ENCODE measurements at regions of chr19 and their contacts with region 1.

Region 1: GRCh38 chr19:11528551-11529341 is at the start of gene ECSIT:
- DNase-seq: peak; percentile 90 to 95 (median 92)
- H3K4me3 ChIP-seq: peak within 1 kb of the TSS; percentile 70 to 83
- H3K4me3 Mint-ChIP-seq: peak within 1 kb of the TSS; percentile 94 to 99 (median 98)
- H3K27ac ChIP-seq: peak within 1 kb of the TSS; percentile 76
- H3K27ac Mint-ChIP-seq: peak within 1 kb of the TSS; percentile 91 to 98 (median 97)
- H3K4me1 ChIP-seq: peaks cover 15% of the 10 kb centered on the region
- H3K4me1 Mint-ChIP-seq: peaks cover 13 to 21% (median 18%) of the 10 kb centered on the region in 4 donors
- H3K27me3 ChIP-seq: no peaks in the 10 kb centered on the region
- H3K27me3 Mint-ChIP-seq: no peaks in the 10 kb centered on the region
- total RNA-seq, gene ECSIT: 39.5 to 46.2 TPM

Region 2: DNA sequence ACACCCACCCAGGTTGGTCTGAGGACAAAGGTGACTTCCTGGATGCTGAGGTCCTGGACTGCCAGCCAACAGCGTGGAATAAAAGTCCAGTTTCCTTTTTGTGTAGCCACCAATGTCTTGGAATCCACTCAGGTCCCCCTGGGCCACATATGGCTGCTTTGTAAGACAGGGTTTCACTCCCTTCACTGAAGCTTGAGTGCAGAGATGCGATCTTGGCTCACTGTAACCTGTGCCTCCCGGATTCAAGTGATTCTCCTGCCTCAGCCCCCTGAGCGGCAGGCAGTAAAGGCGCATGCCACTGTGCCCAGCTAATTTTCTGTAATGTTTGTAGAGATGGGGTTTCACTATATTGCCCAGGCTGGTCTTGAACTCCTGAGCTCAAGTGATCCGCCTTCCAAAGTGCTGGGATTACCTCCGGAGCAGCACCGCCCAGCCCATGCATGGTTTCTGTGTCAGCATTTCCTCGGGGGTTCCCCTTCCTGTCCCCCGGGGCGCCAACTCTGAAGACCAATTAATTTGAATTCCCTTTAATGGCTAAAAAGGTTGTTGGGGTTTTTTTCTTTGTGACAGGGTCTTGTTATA is 348.9 kb before region 1 on chr19:
- CTCF ChIA-PET with region 1: no interaction called
- POLR2A ChIA-PET with region 1: no interaction called
- intact Hi-C with region 1: no loop called
- DNase-seq: no peak
- H3K4me3 ChIP-seq: no peak overlapping the region
- H3K4me3 Mint-ChIP-seq: peak overlapping the region in 2 of 8 donors; percentile 17 to 20
- H3K27ac ChIP-seq: no peak overlapping the region
- H3K27ac Mint-ChIP-seq: peak overlapping the region in 1 of 7 donors; percentile 49
- H3K4me1 ChIP-seq: peaks cover 9% of the 10 kb centered on the region
- H3K4me1 Mint-ChIP-seq: peaks cover 3 to 15% (median 7%) of the 10 kb centered on the region in 4 donors
- H3K27me3 ChIP-seq: no peaks in the 10 kb centered on the region
- H3K27me3 Mint-ChIP-seq: peaks cover 0 to 4% of the 10 kb centered on the region in 2 donors

Region 3: GRCh38 chr19:11293433-11294389 is 235.0 kb before region 1 on chr19:
- CTCF ChIA-PET with region 1: no interaction called
- POLR2A ChIA-PET with region 1: no interaction called
- intact Hi-C with region 1: no loop called
- DNase-seq: peak; percentile 64 to 75 (median 71)
- H3K4me3 ChIP-seq: no peak overlapping the region
- H3K4me3 Mint-ChIP-seq: peak overlapping the region in 3 of 8 donors; percentile 20 to 71 (median 48)
- H3K27ac ChIP-seq: no peak overlapping the region
- H3K27ac Mint-ChIP-seq: peak overlapping the region in 2 of 7 donors; percentile 41 to 46
- H3K4me1 ChIP-seq: peaks cover 8% of the 10 kb centered on the region
- H3K4me1 Mint-ChIP-seq: peaks cover 4 to 8% (median 7%) of the 10 kb centered on the region in 4 donors
- H3K27me3 ChIP-seq: no peaks in the 10 kb centered on the region
- H3K27me3 Mint-ChIP-seq: peaks cover 12 to 16% of the 10 kb centered on the region in 2 donors

Region 4: DNA sequence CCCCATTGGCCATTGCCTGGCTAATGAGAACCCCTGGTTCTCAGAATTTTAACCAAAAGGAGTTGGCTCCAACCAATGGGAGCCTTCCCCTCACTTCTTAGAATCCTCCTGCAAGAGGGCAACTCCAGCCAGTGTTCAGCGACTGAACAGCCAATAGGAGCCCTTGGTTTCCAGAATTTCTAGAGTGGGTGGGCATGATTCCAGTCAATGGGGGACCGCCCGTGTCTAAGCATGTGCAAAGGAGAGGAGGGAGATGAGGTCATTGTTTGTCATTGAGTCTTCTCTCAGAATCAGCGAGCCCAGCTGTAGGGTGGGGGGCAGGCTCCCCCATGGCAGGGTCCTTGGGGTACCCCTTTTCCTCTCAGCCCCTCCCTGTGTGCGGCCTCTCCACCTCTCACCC is 163.8 kb before region 1 on chr19:
- CTCF ChIA-PET with region 1: no interaction called
- POLR2A ChIA-PET with region 1: no interaction called
- intact Hi-C with region 1: no loop called
- DNase-seq: no peak
- H3K4me3 ChIP-seq: no peak overlapping the region
- H3K4me3 Mint-ChIP-seq: no peak overlapping the region
- H3K27ac ChIP-seq: no peak overlapping the region
- H3K27ac Mint-ChIP-seq: no peak overlapping the region
- H3K4me1 ChIP-seq: no peaks in the 10 kb centered on the region
- H3K4me1 Mint-ChIP-seq: no peaks in the 10 kb centered on the region
- H3K27me3 ChIP-seq: no peaks in the 10 kb centered on the region
- H3K27me3 Mint-ChIP-seq: no peaks in the 10 kb centered on the region

Region 5: DNA sequence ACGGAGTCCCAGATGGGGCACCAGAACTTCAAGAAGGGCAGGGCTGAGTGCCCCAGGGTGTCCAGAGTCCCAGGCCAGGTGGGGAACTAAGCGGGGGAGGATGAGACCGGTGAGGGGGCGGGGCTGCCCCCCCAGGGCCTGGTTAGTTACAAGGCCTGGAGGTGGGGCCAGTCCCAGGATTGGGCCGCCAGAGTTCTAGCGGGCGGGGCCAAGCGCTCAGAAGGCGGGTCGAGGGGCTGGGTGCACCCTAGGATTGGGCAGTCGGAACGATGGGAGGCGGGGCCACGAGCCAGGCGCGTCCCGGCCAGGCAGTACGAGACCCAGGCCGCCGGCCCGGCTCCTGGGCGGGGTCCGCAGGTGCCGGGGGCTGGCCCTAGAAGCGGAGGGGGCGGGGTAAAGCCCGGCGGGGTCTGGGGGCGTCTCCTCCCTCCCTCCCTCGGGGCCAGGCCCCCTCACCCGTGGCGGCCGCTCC is 23.7 kb before region 1 on chr19:
- CTCF ChIA-PET with region 1: interaction called, 3 read pairs
- POLR2A ChIA-PET with region 1: interaction called, 11 read pairs
- intact Hi-C with region 1: loop called (anchors 1 kb)
- DNase-seq: peak; percentile 95 to 97 (median 96)
- H3K4me3 ChIP-seq: peak overlapping the region; percentile 59 to 71
- H3K4me3 Mint-ChIP-seq: peak overlapping the region; percentile 79 to 94 (median 86)
- H3K27ac ChIP-seq: peak overlapping the region; percentile 95
- H3K27ac Mint-ChIP-seq: peak overlapping the region; percentile 88 to 94 (median 92)
- H3K4me1 ChIP-seq: peaks cover 14% of the 10 kb centered on the region
- H3K4me1 Mint-ChIP-seq: peaks cover 15 to 28% (median 18%) of the 10 kb centered on the region in 4 donors
- H3K27me3 ChIP-seq: no peaks in the 10 kb centered on the region
- H3K27me3 Mint-ChIP-seq: no peaks in the 10 kb centered on the region

Region 6: DNA sequence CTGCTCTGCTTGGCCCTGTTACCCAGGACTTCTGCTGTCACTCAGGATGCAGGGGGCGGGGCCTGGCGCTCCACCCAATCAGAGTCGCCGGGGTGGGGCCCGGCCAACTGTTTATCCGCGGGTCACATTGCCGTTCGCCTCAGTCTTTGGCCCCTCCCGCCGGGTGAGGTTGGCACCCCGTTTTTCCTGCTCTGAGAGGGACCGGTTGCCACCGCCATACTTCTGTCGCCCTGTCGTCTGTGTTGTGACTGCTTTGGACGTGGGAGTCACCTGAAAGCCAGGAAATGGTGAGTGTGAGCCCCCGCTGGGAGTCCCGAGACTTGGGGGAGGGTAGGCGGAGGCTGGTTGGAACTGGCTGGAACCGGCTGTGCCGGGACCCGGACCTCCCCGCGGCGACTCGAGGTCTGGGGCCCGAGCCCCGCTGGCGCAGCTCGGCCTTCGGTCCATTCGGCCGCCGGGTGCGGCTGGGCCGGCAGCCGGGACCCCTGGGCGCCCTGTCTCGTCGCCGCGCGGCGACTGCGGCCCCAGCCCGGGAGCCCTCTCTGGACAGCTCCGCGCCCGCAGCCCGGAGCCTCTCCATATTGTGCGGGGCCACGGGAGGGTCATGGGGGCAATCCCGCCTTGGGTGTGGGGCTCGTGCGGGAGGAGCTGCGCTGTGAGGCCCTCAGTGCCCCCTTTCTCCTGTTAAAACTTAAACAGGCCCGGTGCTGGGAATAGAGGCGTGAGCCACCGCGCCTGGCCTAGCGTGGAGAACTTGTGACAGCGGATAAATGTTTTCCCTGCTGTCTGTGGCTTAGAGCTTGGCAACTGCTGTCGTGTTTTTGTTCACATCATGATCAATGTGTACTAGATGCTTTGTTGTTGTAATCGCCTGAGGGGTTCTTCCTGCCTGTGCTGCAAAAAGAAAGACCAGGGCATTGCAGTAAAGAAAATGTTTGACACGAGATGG is 536.1 kb after region 1 on chr19 and contains the start of gene ZNF844:
- CTCF ChIA-PET with region 1: no interaction called
- POLR2A ChIA-PET with region 1: no interaction called
- intact Hi-C with region 1: no loop called
- DNase-seq: peak; percentile 48 to 62 (median 56)
- H3K4me3 ChIP-seq: peak within 1 kb of the TSS; percentile 57 to 71
- H3K4me3 Mint-ChIP-seq: peak within 1 kb of the TSS; percentile 83 to 90 (median 86)
- H3K27ac ChIP-seq: peak within 1 kb of the TSS; percentile 11
- H3K27ac Mint-ChIP-seq: peak within 1 kb of the TSS in 6 of 7 donors; percentile 47 to 87 (median 74)
- H3K4me1 ChIP-seq: peaks cover 7% of the 10 kb centered on the region
- H3K4me1 Mint-ChIP-seq: peaks cover 3 to 13% (median 8%) of the 10 kb centered on the region in 4 donors
- H3K27me3 ChIP-seq: no peaks in the 10 kb centered on the region
- H3K27me3 Mint-ChIP-seq: no peaks in the 10 kb centered on the region
- total RNA-seq, gene ZNF844: 8.8 to 9.8 TPM